ENCODE measurements at regions of chr7 and their contacts with region 1.

Region 1: GRCh38 chr7:99990460-99990852 is 14.6 kb upstream of the AZGP1 start:
- DNase-seq: no peak
- ATAC-seq: no peak
- H3K4me3 Mint-ChIP-seq: no peak overlapping the region
- H3K27ac Mint-ChIP-seq: no peak overlapping the region
- H3K4me1 Mint-ChIP-seq: no peaks in the 10 kb centered on the region
- H3K27me3 Mint-ChIP-seq: peaks cover 7% of the 10 kb centered on the region

Region 2: DNA sequence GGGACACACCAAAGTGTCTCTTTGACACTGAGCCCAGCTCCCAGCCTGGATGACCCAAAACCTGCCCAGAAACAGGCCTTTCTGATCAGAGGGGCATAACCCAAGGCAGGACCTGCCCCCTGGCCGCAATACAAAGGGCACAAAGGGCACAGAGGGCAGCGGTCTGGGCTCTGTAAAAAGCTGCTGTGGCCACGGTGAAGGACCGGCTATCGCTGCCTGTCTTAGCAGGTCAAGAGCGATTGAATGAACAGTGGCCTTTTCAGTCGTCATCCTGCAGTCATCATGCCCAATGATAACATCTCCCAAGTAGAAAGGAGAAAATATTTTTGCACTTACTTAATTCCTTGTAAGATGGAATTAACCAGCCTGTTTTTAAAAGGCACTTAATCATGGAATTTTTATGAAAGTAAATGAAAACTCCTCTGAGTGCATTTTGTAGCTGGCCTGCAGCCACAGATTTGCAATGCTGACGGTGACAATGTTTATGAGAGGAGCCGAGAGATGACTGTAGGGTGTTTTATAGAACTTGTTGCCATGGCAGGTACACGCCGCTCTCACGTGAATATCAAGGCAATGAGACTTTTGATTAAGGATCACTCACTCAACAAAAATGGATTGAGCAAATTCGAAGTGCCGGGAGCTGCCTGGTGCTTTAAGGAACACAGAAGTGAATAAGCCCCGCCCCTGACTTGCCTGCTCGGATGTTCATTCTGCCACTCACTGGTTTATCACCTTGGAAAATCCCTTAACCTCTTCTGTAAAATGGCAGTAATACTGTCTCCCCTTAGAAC is 1826.6 kb before region 1 on chr7:
- CTCF ChIA-PET with region 1: no interaction called
- POLR2A ChIA-PET with region 1: no interaction called
- intact Hi-C with region 1: no loop called
- DNase-seq: no peak
- ATAC-seq: no peak
- H3K4me3 Mint-ChIP-seq: no peak overlapping the region
- H3K27ac Mint-ChIP-seq: no peak overlapping the region
- H3K4me1 Mint-ChIP-seq: peaks cover 5% of the 10 kb centered on the region
- H3K27me3 Mint-ChIP-seq: no peaks in the 10 kb centered on the region

Region 3: DNA sequence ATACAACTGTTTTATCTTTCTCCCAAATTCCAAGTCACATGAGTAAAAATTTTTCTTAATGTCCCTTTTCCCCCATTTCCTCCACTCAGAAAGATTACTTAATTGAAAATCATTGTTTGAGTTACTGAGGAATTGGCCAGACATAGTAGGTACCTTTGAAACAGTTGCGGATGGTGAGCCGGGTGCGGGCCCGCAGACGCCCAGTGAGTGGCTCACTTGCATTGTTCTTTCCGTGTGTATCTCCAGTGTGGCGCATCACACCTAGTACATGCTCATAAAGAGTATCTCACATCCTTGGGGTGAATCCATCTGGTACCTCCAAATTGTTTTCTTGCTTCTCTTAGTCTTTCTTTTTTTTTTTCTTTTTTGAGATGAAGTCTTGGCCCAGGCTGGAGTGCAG is 1097.8 kb before region 1 on chr7:
- CTCF ChIA-PET with region 1: no interaction called
- POLR2A ChIA-PET with region 1: no interaction called
- intact Hi-C with region 1: no loop called
- DNase-seq: no peak
- ATAC-seq: no peak
- H3K4me3 Mint-ChIP-seq: no peak overlapping the region
- H3K27ac Mint-ChIP-seq: no peak overlapping the region
- H3K4me1 Mint-ChIP-seq: peaks cover 7% of the 10 kb centered on the region
- H3K27me3 Mint-ChIP-seq: no peaks in the 10 kb centered on the region

Region 4: DNA sequence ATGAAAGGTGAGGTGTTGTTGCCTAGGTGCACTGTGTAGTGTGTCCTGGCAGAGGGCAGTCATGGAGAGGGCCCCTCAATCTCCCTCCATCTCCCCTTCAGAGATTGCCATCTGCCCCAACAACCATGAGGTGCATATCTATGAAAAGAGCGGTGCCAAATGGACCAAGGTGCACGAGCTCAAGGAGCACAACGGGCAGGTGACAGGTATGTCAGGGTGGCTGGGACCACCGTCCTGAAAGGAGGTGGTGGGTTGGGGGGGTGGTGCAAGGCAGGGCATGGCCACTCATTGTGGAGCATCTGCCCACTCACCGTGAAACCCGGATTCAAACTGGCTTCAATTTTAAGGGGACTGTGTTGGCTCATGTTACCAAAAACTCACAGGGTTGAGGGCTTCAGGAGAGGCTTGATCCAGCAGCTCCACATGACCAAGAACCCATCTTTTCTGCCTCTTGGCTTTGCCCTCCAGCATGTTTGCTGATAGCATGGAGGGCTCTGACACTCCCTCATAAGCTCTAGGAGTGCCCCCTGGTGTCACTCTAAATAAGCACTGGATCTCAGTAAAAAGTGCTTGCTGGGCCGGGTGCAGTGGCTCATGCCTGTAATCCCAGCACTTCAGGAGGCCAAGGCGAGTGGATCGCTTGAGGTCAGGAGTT is 603.7 kb before region 1 on chr7:
- CTCF ChIA-PET with region 1: no interaction called
- POLR2A ChIA-PET with region 1: no interaction called
- intact Hi-C with region 1: no loop called
- DNase-seq: peak; percentile 58
- ATAC-seq: peak; percentile 71
- H3K4me3 Mint-ChIP-seq: no peak overlapping the region
- H3K27ac Mint-ChIP-seq: peak overlapping the region; percentile 37
- H3K4me1 Mint-ChIP-seq: peaks cover 27% of the 10 kb centered on the region
- H3K27me3 Mint-ChIP-seq: no peaks in the 10 kb centered on the region

Region 5: DNA sequence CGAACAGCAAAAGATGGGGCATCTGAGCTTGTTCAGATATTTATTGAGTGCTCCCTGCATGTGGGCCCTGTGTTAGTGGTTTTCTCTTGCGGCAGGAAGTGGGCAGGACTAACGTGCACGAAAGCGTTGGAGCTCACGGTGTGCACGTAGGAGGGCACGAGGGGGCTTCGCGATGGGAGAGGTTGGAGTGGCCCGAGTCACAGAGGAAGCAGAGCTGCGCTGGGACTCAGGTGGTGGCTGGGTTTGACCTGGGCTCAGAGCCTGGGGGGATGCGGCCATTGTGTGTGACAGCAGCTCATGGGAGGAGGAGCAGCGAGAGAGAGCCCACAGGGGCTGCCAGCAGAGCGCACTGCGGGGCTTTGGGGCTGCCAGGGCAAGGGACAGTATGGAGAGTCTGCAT is 366.0 kb before region 1 on chr7:
- CTCF ChIA-PET with region 1: interaction called, 3 read pairs
- POLR2A ChIA-PET with region 1: no interaction called
- intact Hi-C with region 1: loop called in 1 of 2 experiments (anchors 5 kb)
- DNase-seq: peak; percentile 89
- ATAC-seq: peak; percentile 76
- H3K4me3 Mint-ChIP-seq: peak overlapping the region; percentile 88
- H3K27ac Mint-ChIP-seq: peak overlapping the region; percentile 98
- H3K4me1 Mint-ChIP-seq: peaks cover 67% of the 10 kb centered on the region
- H3K27me3 Mint-ChIP-seq: no peaks in the 10 kb centered on the region

Region 6: DNA sequence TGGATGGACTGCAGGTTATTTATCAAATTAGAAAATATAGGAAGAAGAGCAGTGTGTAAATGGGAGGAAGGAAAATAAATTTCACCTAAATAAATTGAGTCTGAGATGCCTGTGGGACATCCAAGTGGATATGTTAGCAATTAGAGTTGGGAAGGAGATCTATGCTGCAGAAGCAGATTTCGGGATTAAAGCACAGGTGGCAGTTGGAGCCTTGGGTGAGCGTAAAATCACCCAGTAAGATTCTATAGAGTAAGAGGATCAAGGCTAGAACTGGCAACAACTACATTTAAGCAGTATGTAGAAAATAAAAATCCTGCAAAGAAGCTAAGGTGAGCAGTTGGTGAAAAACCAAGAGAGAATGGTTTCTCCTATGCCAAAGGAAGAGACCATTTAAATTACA is 79.5 kb before region 1 on chr7:
- CTCF ChIA-PET with region 1: interaction called, 50 read pairs
- POLR2A ChIA-PET with region 1: no interaction called
- intact Hi-C with region 1: loop called (anchors 1 kb)
- DNase-seq: no peak
- ATAC-seq: no peak
- H3K4me3 Mint-ChIP-seq: no peak overlapping the region
- H3K27ac Mint-ChIP-seq: peak overlapping the region; percentile 43
- H3K4me1 Mint-ChIP-seq: peaks cover 30% of the 10 kb centered on the region
- H3K27me3 Mint-ChIP-seq: no peaks in the 10 kb centered on the region

Region 7: DNA sequence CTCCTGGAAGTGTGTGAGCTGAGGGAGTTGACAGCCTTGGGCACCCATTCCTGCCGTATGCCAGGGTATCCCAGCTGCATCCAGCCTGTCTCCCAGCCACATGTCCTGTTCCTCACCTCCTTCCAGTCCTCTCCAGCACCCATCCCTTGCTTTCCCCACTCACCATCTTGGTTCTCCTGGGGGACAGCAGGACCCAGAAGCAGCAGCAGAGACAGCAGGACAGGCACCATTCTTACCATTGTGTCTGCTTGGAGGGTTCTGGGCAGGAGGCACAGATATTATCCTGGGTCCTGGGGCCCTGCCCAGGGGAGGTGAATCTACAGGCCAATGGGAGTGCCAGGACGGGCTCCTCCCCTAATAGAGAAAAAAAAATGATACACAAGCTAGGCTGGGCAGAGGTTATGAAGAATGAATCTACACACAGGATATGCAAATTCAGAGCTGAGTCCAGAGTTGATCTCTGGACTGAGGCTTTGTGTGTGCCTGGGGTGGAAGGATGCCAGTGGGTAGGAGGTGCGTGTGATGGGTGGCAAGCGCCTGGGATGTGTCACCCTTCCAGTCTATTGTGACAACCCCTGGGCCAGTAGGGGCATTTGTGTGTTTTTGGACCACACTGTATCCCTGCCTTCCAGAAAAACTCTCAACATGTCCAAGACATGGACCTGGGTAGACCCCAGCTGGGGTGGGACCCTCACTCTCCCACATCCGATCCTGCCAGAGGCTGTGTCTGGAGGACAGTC is 14.5 kb before region 1 on chr7 and contains the start of gene AZGP1:
- CTCF ChIA-PET with region 1: interaction called, 8 read pairs
- POLR2A ChIA-PET with region 1: no interaction called
- intact Hi-C with region 1: loop called in 1 of 2 experiments (anchors 1 kb)
- DNase-seq: no peak
- ATAC-seq: no peak
- H3K4me3 Mint-ChIP-seq: no peak within 1 kb of the TSS
- H3K27ac Mint-ChIP-seq: no peak within 1 kb of the TSS
- H3K4me1 Mint-ChIP-seq: peaks cover 12% of the 10 kb centered on the region
- H3K27me3 Mint-ChIP-seq: peaks cover 4% of the 10 kb centered on the region
- total RNA-seq, gene AZGP1: not detected

Region 8: DNA sequence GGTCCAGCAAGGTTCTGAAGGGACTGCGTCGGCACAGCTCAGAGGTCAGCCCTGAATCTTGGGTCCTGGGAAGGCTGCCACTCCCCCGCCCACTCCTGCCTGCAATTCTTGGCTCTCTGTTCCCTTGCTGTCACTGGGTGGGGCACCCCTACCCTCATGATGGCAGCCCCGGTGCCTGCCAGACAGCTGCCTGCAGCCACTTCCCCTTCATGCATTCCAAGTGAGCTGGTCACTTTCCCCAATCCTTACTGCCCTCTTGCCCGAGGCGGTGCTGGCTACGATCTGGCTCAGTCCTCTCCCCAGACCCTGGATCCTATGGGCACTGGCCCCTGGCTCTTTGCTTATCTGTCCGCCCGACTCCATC is 1624.5 kb after region 1 on chr7:
- CTCF ChIA-PET with region 1: no interaction called
- POLR2A ChIA-PET with region 1: no interaction called
- intact Hi-C with region 1: no loop called
- DNase-seq: no peak
- ATAC-seq: no peak
- H3K4me3 Mint-ChIP-seq: no peak overlapping the region
- H3K27ac Mint-ChIP-seq: no peak overlapping the region
- H3K4me1 Mint-ChIP-seq: no peaks in the 10 kb centered on the region
- H3K27me3 Mint-ChIP-seq: peaks cover 2% of the 10 kb centered on the region